ENCODE measurements at regions of chr3 and their contacts with region 1.

Region 1: GRCh38 chr3:150094150-150094925 is 123.6 kb upstream of the PFN2 start:
- DNase-seq: peak; percentile 91 to 95
- ATAC-seq: peak; percentile 79 to 88
- H3K4me3 ChIP-seq: peak overlapping the region in 1 of 4 donors; percentile 24
- H3K27ac ChIP-seq: peak overlapping the region; percentile 82 to 97 (median 90)
- H3K4me1 ChIP-seq: peaks cover 35 to 60% of the 10 kb centered on the region in 2 donors
- H3K27me3 ChIP-seq: no peaks in the 10 kb centered on the region
- CTCF ChIP-seq: peak in 2 of 5 experiments; percentile 5 to 15
- POLR2A ChIP-seq: peak; percentile 31 to 55

Region 2: DNA sequence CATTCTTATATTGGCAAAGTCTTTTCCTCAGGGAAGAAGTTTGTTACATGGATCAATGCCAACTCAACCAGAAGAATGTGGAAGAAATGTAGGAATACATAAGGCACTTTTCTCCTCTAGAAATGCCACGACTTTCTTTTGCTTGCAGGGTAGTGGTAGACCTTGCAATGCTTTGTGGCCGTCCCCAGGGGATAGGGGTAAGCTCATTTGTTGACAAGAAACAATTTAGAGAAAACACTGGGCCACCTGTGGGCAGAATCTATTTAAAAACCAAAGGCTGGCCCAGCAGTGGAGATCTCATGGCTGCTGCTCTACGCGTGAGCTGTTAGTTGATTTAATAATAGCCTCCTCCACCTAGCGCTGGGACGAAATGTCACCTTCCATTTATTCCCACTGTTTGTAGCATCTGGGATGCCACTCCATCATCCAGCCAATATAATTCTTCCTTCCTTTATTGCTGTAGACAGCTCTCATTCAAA is 59.0 kb before region 1 on chr3:
- in situ Hi-C with region 1: loop called in 1 of 4 experiments (anchors 10 kb)
- intact Hi-C with region 1: loop called (anchors 1 kb)
- DNase-seq: peak; percentile 75 to 77
- ATAC-seq: peak; percentile 77 to 87
- H3K4me3 ChIP-seq: peak overlapping the region in 1 of 4 donors; percentile 18
- H3K27ac ChIP-seq: peak overlapping the region; percentile 91 to 98 (median 94)
- H3K4me1 ChIP-seq: peaks cover 17 to 31% of the 10 kb centered on the region in 2 donors
- H3K27me3 ChIP-seq: no peaks in the 10 kb centered on the region
- CTCF ChIP-seq: peak in 2 of 5 experiments; percentile 19 to 25
- POLR2A ChIP-seq: no peak

Region 3: GRCh38 chr3:150069154-150069527 is 25.2 kb before region 1 on chr3:
- in situ Hi-C with region 1: no loop called
- intact Hi-C with region 1: no loop called
- DNase-seq: peak; percentile 72 to 80
- ATAC-seq: peak; percentile 80 to 85
- H3K4me3 ChIP-seq: no peak overlapping the region
- H3K27ac ChIP-seq: peak overlapping the region; percentile 82 to 94 (median 90)
- H3K4me1 ChIP-seq: peaks cover 52 to 64% of the 10 kb centered on the region in 2 donors
- H3K27me3 ChIP-seq: no peaks in the 10 kb centered on the region
- CTCF ChIP-seq: no peak
- POLR2A ChIP-seq: peak in 1 of 2 donors; percentile 20

Region 4: DNA sequence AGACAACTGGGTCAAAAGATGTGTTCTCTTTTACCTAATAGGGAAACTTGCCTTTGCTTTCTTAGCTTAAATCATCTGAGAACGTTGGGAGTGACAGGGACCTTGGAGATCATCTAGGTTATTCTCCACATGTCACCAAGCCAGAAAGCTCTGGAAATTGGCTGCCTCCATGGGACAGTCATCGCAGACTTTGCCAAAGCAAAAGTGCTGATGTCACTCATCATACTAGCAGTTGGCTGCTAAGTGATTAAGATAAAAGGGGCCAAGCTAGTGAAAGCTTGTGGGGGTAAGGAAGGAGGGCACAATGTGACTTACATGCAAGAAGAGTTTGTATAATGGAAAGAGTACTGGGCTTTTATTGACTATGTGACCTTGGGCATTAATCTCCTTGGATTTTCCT is 74.4 kb after region 1 on chr3:
- in situ Hi-C with region 1: no loop called
- intact Hi-C with region 1: loop called (anchors 5 kb)
- DNase-seq: peak; percentile 62 to 84
- ATAC-seq: peak; percentile 99
- H3K4me3 ChIP-seq: no peak overlapping the region
- H3K27ac ChIP-seq: peak overlapping the region; percentile 73 to 89 (median 80)
- H3K4me1 ChIP-seq: peaks cover 25 to 31% of the 10 kb centered on the region in 2 donors
- H3K27me3 ChIP-seq: no peaks in the 10 kb centered on the region
- CTCF ChIP-seq: no peak
- POLR2A ChIP-seq: no peak

Region 5: DNA sequence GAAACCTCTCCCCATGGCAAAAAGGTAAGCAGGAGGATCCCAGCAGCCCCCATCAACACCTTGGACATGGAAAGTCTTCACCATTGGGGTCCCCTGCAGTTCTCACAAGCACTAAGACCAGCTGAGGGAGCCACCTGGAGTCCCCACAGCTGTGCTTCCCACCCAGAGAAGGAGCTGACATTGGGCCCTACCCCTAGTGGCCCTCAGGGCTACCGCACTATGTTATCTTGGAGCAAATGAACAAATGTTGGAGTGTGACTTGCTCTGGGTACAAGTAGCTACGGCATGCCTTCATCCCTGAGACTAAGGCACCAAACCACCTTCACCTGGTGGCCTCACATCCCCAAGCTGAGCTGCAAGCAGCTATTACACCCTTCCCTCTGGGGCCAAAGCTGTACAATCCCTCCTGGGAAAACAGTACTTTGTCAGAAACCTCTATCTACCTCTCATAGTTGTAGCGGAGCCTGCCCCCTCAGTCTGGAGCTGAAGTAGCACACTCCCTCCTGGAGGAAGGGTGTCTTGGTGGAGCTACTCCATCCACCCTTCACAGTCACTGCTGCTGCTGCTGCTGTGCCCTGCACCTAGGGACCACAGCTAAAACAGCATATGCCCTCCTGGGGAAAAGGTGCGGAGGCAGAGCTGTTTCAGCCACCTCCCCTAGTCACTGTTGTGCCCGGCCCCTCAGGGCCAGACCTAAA is 409.2 kb after region 1 on chr3:
- in situ Hi-C with region 1: no loop called
- intact Hi-C with region 1: no loop called
- DNase-seq: no peak
- ATAC-seq: no peak
- H3K4me3 ChIP-seq: no peak overlapping the region
- H3K27ac ChIP-seq: no peak overlapping the region
- H3K4me1 ChIP-seq: no peaks in the 10 kb centered on the region
- H3K27me3 ChIP-seq: no peaks in the 10 kb centered on the region
- CTCF ChIP-seq: no peak
- POLR2A ChIP-seq: no peak

Measured in gastrocnemius medialis (tissue), 4 donors.